Gastrocnemius medialis (tissue), 4 donors: ENCODE measurements at regions of chrX and their contacts with region 1.

Region 1: DNA sequence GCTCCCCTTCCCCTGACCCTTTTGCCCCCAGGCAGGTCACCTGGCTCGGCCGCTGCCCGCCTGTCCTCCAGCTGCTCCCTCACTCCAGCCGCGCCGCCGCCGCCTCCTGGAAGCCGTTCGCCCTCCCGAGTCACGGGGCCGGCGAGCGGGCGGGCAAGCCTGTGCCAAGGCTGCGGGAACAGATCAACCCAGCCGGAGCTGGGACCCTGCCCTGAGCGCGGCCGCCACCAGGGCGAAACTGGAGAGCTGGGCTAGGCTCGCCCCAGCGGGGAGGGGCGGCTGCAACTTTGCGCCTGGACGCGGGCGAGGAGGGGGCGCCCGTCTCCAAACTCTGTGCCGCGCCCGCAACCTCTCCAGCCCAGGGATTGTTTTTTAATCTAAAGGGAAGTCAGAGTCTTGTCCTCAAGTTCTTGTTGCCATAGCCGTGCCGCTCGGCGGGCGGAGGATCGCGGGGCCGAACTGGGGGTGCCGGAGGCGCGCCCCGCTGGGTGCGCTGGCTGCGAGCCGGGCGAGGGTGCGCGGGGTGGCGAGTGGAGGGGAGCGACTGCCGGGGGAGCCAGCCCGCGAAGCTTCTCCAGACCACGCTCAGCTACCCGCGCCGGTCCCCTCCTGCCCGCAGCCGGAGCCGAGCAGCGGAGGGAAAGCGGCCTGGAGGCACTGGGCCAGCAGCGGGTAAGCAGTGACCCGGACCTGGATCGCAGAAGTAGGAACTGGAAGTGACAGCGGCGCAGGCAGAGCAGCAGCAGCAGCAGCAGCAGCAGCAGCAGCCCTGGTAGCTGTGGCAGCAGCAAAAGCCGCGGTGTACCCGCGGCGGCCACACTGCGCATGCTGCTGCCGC is 13.4 kb downstream of the ARHGEF6 start:
- DNase-seq: peak; percentile 53 to 80
- ATAC-seq: peak; percentile 72 to 74
- H3K4me3 ChIP-seq: peak overlapping the region; percentile 62 to 82 (median 70)
- H3K27ac ChIP-seq: peak overlapping the region; percentile 91 to 99 (median 96)
- H3K4me1 ChIP-seq: peaks cover 12 to 20% of the 10 kb centered on the region in 2 donors
- H3K27me3 ChIP-seq: no peaks in the 10 kb centered on the region
- CTCF ChIP-seq: peak; percentile 36 to 60 (median 56)
- POLR2A ChIP-seq: peak; percentile 43 to 56

Region 2: DNA sequence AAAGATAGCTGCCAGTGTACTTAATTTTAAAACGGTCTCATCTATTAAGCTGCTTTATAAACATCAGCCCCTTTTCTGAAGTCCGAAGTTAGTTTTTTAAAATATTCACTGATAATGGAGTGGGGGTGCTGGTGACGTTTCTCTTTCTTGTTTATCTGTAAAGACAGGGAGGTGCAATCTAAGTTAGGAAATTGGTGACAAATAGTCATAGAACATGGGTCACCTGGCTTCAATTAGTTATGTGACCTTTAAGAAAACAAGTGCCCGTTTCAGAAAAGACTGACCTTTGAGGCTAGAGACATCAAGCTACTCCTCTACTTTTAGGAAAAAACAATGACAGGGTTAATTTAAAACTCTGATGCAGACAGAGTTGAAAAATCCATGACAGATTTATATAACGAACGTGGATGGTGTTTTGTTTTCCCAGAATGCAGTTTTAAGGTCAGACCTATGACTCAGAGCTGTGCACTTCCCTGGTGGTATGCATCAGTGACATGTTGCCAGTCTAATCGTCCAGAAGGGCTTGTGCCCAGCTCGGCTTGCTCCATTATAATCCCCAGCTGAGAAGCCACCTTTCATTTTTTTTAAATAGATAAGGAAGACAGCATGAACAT is 581.8 kb before region 1 on chrX:
- in situ Hi-C with region 1: no loop called
- intact Hi-C with region 1: loop called (anchors 5 kb)
- DNase-seq: peak in 1 of 2 donors; percentile 67
- ATAC-seq: peak; percentile 65 to 76
- H3K4me3 ChIP-seq: peak overlapping the region in 2 of 4 donors; percentile 21 to 30
- H3K27ac ChIP-seq: peak overlapping the region; percentile 84 to 92 (median 84)
- H3K4me1 ChIP-seq: peaks cover 49 to 65% of the 10 kb centered on the region in 2 donors
- H3K27me3 ChIP-seq: no peaks in the 10 kb centered on the region
- CTCF ChIP-seq: no peak
- POLR2A ChIP-seq: peak in 1 of 2 donors; percentile 56

Region 3: DNA sequence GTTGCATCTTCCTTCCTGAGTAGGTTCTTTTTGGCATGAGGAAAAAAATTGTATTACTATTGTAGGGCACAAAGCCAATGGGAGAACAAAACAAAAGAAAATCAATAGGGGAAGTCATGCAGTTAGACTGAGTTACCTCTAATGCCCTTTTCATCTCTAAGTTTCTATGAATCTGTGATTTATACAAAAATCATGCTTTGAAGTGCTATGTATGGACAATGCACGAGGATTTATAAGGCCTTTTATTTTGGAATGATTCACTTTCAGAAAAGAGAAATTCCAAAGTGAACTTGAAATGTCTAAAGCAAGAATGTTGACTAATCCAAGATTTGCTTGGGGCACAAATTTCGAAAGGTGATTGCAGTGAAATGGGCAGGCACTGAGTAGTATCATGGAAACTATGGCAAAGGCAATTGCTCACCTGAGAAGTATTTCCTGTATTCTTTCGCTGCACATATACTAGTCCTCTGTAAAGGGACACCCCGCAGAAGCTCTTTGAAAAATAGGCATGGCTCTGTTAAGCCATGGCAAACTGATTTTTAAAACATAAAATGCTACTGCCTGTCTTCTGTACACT is 413.7 kb before region 1 on chrX:
- in situ Hi-C with region 1: no loop called
- intact Hi-C with region 1: no loop called
- DNase-seq: no peak
- ATAC-seq: no peak
- H3K4me3 ChIP-seq: no peak overlapping the region
- H3K27ac ChIP-seq: no peak overlapping the region
- H3K4me1 ChIP-seq: no peaks in the 10 kb centered on the region
- H3K27me3 ChIP-seq: no peaks in the 10 kb centered on the region
- CTCF ChIP-seq: no peak
- POLR2A ChIP-seq: no peak

Region 4: GRCh38 chrX:136725446-136726104 is 41.7 kb before region 1 on chrX:
- in situ Hi-C with region 1: no loop called
- intact Hi-C with region 1: loop called (anchors 5 kb)
- DNase-seq: peak; percentile 64 to 75
- ATAC-seq: peak; percentile 99 to 100
- H3K4me3 ChIP-seq: no peak overlapping the region
- H3K27ac ChIP-seq: peak overlapping the region; percentile 58 to 75 (median 64)
- H3K4me1 ChIP-seq: peaks cover 12 to 23% of the 10 kb centered on the region in 2 donors
- H3K27me3 ChIP-seq: no peaks in the 10 kb centered on the region
- CTCF ChIP-seq: no peak
- POLR2A ChIP-seq: no peak